HepG2 (cell line): ENCODE measurements at regions of chr9 and their contacts with region 1.

Region 1: GRCh38 chr9:37913480-37914153 is 9.7 kb upstream of the SLC25A51 start:
- DNase-seq: peak; percentile 81
- ATAC-seq: peak; percentile 78
- H3K4me3 ChIP-seq: no peak overlapping the region
- H3K27ac ChIP-seq: no peak overlapping the region
- H3K4me1 ChIP-seq: peaks cover 17% of the 10 kb centered on the region
- H3K27me3 ChIP-seq: no peaks in the 10 kb centered on the region
- CTCF ChIP-seq: peak; percentile 98
- EP300 ChIP-seq: no peak
- POLR2A ChIP-seq: 0 out of 4 replicates have a peak, but pooled peaks of 1 of the 2 experiments have one; percentile 19
- RAD21 ChIP-seq: peak; percentile 91

Region 2: DNA sequence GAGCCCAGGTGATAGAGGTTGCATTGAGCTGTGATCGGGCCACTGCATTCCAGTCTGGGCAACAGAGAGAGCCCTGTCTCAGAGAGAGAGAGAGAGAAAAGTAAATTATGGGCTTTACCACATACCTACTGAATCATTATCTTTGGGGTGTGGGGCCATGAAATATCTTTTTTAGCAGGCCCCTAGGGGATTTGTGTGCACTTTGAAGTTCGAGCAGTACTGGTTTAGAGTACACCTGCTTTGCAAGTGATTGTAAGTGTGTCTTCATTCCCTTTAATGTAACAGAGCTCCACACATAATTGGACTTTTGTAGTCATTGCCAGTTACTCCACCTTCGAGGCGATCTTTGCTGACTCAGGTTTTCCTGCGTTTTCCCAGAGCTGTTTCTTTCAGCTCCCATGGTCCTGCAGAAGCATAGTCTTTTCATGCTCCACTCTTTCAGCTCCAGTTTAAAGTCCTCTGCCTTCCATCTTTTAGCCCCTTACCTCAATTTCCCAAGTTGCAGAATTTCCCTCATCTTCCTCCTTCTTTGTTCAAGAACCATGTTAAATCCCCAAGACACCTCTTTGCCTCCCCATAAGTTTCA is 286.8 kb before region 1 on chr9:
- CTCF ChIA-PET with region 1: no interaction called
- POLR2A ChIA-PET with region 1: no interaction called
- in situ Hi-C with region 1: no loop called
- intact Hi-C with region 1: no loop called
- DNase-seq: no peak
- ATAC-seq: no peak
- H3K4me3 ChIP-seq: no peak overlapping the region
- H3K27ac ChIP-seq: no peak overlapping the region
- H3K4me1 ChIP-seq: no peaks in the 10 kb centered on the region
- H3K27me3 ChIP-seq: peaks cover 0 to 23% of the 10 kb centered on the region in 2 experiments; a peak in 2 of 5 replicates
- CTCF ChIP-seq: no peak
- EP300 ChIP-seq: no peak
- POLR2A ChIP-seq: no peak
- RAD21 ChIP-seq: no peak

Region 3: DNA sequence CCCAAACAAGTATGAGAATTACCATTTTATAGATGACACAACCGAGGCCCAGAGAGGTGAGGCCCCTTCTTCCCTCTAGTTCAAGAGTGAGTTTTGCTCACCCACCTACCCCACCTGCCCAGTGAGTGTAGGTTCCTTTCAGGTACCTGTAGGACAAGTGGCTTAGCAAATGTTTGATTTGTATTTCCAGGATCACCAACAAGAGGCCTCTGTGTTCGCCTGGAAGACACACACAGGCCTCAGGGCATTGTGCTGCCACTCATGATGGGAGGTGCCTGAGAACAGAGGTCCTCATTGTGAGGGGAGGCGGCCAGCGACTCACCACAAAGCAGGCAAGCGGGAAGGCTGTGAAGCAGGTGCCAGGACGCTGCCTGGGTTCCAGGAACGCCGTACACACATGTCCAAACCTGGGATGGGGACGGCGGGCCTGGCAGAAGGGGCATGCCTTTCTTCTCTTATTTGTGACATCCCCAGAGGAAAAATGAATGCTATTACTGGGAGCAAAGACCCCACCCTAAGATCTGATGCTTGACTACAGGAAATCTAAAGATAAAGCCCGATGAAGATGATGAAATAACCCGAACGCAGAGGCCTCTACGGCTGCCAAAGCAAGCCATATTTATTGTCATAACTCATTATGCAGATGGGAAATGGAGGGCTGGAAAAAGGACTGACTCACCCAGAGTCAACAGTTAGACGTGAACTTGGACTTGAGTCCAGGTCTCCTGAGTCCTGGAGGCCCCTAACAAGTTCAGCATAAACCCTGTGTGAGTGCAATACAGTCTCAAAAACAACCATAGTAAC is 50.5 kb after region 1 on chr9:
- CTCF ChIA-PET with region 1: no interaction called
- POLR2A ChIA-PET with region 1: interaction called, 10 read pairs
- in situ Hi-C with region 1: no loop called
- intact Hi-C with region 1: loop called (anchors 5 kb)
- DNase-seq: peak; percentile 94
- ATAC-seq: peak; percentile 83
- H3K4me3 ChIP-seq: peak overlapping the region in 1 of 3 experiments; percentile 42; a peak in 2 of 6 replicates
- H3K27ac ChIP-seq: peak overlapping the region; percentile 65
- H3K4me1 ChIP-seq: peaks cover 78% of the 10 kb centered on the region
- H3K27me3 ChIP-seq: no peaks in the 10 kb centered on the region
- CTCF ChIP-seq: peak; percentile 21; the same call in 1 of the 2 replicates
- EP300 ChIP-seq: peak in 1 of 2 experiments; percentile 56; a peak in 2 of 4 replicates
- POLR2A ChIP-seq: no peak
- RAD21 ChIP-seq: no peak

Region 4: DNA sequence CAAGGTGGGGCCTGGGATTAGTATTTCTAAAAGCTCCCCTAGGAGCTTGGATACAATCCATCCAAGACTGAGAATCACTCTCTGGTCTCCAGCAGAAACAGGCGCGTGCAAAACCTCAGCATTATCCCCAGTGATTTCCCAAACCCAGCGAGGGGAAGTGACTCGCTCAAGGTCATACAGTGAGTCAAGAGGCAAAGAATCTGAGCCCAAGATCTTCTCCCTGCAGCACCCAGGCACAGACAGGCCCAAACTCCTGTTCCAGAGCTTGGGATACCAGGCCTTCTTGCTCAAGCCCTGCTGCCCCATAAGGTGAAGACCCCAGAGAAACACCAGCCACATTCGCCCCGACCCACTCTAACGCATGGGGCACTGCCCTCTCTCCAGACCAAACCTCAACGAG is 122.3 kb after region 1 on chr9:
- CTCF ChIA-PET with region 1: no interaction called
- POLR2A ChIA-PET with region 1: no interaction called
- in situ Hi-C with region 1: no loop called
- intact Hi-C with region 1: no loop called
- DNase-seq: peak; percentile 66
- ATAC-seq: peak; percentile 44
- H3K4me3 ChIP-seq: no peak overlapping the region
- H3K27ac ChIP-seq: no peak overlapping the region
- H3K4me1 ChIP-seq: peaks cover 96% of the 10 kb centered on the region
- H3K27me3 ChIP-seq: no peaks in the 10 kb centered on the region
- CTCF ChIP-seq: no peak
- EP300 ChIP-seq: peak in 1 of 2 experiments; percentile 52; a peak in 1 of 4 replicates
- POLR2A ChIP-seq: peak; percentile 23 to 37; a peak in 2 of 4 replicates
- RAD21 ChIP-seq: no peak

Region 5: GRCh38 chr9:38047301-38048251 is 134.0 kb after region 1 on chr9:
- CTCF ChIA-PET with region 1: no interaction called
- POLR2A ChIA-PET with region 1: interaction called, 14 read pairs
- in situ Hi-C with region 1: no loop called
- intact Hi-C with region 1: no loop called
- DNase-seq: peak; percentile 99
- ATAC-seq: peak; percentile 94
- H3K4me3 ChIP-seq: peak overlapping the region; percentile 8 to 54 (median 26); a peak in 5 of 6 replicates
- H3K27ac ChIP-seq: peak overlapping the region; percentile 92
- H3K4me1 ChIP-seq: peaks cover 95% of the 10 kb centered on the region
- H3K27me3 ChIP-seq: no peaks in the 10 kb centered on the region
- CTCF ChIP-seq: peak; percentile 24
- EP300 ChIP-seq: peak; percentile 91
- POLR2A ChIP-seq: peak; percentile 73 to 82
- RAD21 ChIP-seq: peak; percentile 35; the same call in 1 of the 2 replicates

Region 6: DNA sequence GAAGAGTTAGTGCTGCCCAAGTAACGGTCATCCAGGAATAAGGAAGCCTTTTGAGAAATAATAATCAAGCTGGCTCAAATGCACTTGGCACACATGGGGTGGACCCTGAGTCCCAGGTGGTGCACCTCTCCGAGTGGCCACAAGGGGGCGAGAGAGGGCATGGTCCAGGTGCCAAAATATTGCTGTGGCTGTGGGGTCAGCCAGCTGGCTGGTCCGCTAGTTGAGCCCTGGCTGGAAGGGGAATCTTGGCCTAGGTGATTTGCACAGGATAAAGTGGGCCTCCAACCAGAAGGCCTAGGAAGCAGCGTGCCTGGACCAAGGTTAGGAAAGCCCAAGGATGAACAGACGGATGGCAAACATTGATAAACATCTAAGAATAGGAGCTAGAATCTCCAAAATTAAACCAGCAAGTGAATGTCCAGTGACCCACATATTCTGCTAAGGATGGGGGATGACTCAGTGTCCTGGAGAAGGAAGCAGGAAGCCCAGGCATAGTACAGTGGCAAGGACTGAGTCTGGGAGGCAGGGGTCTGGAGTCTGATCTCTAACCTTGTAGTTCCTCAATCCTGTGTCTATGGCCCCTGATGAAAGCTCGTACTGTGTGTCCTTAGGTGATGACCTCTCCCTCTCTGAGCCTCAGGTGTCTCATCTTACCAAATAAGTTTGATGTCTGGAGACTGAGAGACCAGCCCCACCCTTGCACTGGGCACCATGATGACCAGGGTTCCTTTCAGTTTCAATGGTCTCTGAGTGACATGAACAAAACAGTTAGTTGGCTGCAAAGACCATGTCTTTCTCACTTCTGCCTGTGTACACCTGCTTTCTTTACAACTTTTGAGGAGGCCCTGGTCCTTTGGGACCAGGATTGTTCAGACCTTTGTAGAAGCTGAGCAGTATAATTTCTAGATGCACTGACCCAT is 174.6 kb after region 1 on chr9:
- CTCF ChIA-PET with region 1: interaction called, 16 read pairs
- POLR2A ChIA-PET with region 1: interaction called, 4 read pairs
- in situ Hi-C with region 1: no loop called
- intact Hi-C with region 1: loop called (anchors 2 kb)
- DNase-seq: peak; percentile 39
- ATAC-seq: peak; percentile 88
- H3K4me3 ChIP-seq: no peak overlapping the region
- H3K27ac ChIP-seq: no peak overlapping the region
- H3K4me1 ChIP-seq: no peaks in the 10 kb centered on the region; the same call in 1 of the 2 replicates
- H3K27me3 ChIP-seq: peaks cover 4 to 31% of the 10 kb centered on the region in 2 experiments; a peak in 3 of 5 replicates
- CTCF ChIP-seq: peak; percentile 91
- EP300 ChIP-seq: no peak
- POLR2A ChIP-seq: no peak
- RAD21 ChIP-seq: peak; percentile 49; the same call in 1 of the 2 replicates

Region 7: GRCh38 chr9:38171926-38172325 is 258.3 kb after region 1 on chr9:
- CTCF ChIA-PET with region 1: no interaction called
- POLR2A ChIA-PET with region 1: interaction called, 10 read pairs
- in situ Hi-C with region 1: no loop called
- intact Hi-C with region 1: no loop called
- DNase-seq: no peak
- ATAC-seq: no peak
- H3K4me3 ChIP-seq: no peak overlapping the region
- H3K27ac ChIP-seq: no peak overlapping the region
- H3K4me1 ChIP-seq: peaks cover 15% of the 10 kb centered on the region
- H3K27me3 ChIP-seq: 0 out of 5 replicates have a peak, but pooled peaks cover 0 to 10% of the 10 kb centered on the region in 2 experiments
- CTCF ChIP-seq: no peak
- EP300 ChIP-seq: no peak
- POLR2A ChIP-seq: no peak
- RAD21 ChIP-seq: no peak